CD4-positive, alpha-beta T cell (primary cell): ENCODE measurements at regions of chr2 and their contacts with region 1.

Region 1: DNA sequence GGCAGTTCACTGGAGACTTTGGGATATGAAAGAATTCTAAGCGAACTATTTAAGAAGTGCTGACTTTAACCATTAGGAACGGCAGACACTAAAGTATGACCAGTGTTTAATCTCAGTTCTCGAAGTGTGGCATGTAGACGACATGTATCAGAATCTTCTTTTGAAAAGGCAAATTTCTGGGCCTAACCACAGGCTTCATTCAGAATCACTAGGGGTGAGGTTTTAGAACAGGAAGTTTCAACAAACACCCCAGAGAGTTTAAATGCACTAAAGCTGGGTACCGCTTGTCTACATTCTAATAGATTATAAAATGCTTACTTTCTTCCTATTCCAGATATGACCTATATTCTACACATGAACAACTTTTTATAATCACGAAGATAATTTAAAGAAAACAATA is 180.3 kb downstream of the ANKRD44 start:
- DNase-seq: peak in 4 of 14 experiments; percentile 27 to 56 (median 56)
- ATAC-seq: peak; percentile 94
- H3K4me3 ChIP-seq: no peak overlapping the region
- H3K4me3 Mint-ChIP-seq: peak overlapping the region; percentile 11
- H3K27ac ChIP-seq: peak overlapping the region in 1 of 2 donors; percentile 49
- H3K27ac Mint-ChIP-seq: peak overlapping the region; percentile 85
- H3K4me1 ChIP-seq: peaks cover 37% of the 10 kb centered on the region
- H3K4me1 Mint-ChIP-seq: peaks cover 92% of the 10 kb centered on the region
- H3K27me3 ChIP-seq: no peaks in the 10 kb centered on the region
- H3K27me3 Mint-ChIP-seq: no peaks in the 10 kb centered on the region
- CTCF ChIP-seq: no peak

Region 2: DNA sequence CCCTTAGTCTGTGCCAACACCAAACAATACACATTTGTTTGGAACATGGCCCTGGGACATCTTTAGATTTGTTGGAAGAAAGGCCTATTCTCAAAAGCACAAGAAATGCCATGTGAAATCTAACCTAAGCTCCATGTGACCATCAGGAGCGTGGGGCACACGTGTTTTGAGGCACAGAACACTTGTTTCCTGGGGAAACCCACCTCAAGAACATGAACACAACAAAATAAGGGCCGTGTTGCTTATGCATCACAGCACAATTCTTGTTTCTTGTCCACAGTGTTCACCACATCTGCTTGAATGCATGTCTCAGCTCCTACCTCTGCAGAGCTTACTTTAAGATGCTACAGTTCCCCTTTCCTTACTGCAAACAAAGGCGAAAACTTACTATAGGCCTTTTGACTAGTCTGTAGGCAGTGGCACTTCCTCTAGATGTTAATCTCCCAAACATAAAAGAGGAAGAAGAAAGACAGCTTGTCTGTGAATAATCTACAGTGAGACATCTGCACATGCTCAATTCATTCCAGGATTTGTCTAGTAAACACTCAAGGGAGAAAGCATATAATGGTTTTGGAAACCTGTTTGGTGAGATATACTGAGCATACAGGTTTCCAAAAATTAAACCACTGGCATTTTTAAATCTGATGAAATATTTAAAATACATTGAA is 15.3 kb after region 1 on chr2:
- CTCF ChIA-PET with region 1: interaction called, 9 read pairs
- POLR2A ChIA-PET with region 1: interaction called, 15 read pairs
- intact Hi-C with region 1: loop called in 1 of 2 experiments (anchors 2 kb)
- DNase-seq: peak in 6 of 14 experiments; percentile 6 to 75 (median 50)
- ATAC-seq: peak; percentile 93
- H3K4me3 ChIP-seq: no peak overlapping the region
- H3K4me3 Mint-ChIP-seq: peak overlapping the region; percentile 64
- H3K27ac ChIP-seq: peak overlapping the region in 1 of 2 donors; percentile 68
- H3K27ac Mint-ChIP-seq: peak overlapping the region; percentile 85
- H3K4me1 ChIP-seq: peaks cover 46% of the 10 kb centered on the region
- H3K4me1 Mint-ChIP-seq: peaks cover 84% of the 10 kb centered on the region
- H3K27me3 ChIP-seq: no peaks in the 10 kb centered on the region
- H3K27me3 Mint-ChIP-seq: no peaks in the 10 kb centered on the region
- CTCF ChIP-seq: no peak